ENCODE measurements at regions of chrX and their contacts with region 1.

Region 1: GRCh38 chrX:151082076-151082948 is 94.1 kb upstream of the GPR50 start:
- H3K4me3 ChIP-seq: no peak overlapping the region
- H3K27ac ChIP-seq: no peak overlapping the region
- H3K4me1 ChIP-seq: no peaks in the 10 kb centered on the region
- CTCF ChIP-seq: peak; percentile 82

Region 2: DNA sequence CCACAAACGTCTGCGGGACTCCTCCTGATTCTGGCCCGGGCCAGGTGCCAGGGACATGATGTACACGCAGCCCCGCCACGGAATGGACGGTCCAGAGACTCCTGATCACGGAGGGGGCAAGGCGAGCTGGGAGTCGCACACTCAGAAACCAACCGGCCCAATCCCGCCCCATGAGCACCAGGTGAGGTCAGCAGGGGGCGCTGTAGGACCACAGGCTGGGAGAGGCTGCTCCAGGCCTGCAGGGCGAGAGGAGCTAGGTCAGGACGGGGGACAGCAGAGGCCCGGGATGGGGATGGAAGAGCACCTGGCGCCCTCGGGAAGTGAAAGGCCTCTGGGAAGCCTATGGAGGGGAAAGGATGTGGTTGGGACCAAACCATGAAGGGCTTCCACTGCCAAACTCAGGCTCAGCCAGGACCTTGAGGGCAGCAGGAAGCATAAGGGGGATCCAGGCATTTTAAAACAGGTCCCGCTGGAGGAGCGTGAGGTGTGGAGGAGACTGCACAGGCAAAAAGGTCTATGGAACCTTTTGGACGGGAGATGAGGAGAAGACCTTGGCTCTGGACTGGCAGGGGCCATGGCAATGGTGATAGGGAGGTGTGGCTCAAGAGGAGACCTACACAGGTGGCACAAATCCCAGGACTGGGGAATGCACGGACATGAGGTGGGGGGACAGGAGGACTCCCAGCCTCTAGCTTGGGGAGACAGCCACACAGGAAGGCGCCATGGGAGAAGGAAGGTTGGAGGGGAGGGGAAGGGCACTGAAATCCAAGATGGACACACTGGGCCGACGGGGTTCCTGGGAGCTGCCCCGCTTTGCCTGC is 310.0 kb before region 1 on chrX:
- CTCF ChIA-PET with region 1: interaction called, 99 read pairs
- POLR2A ChIA-PET with region 1: interaction called, 5 read pairs
- H3K4me3 ChIP-seq: no peak overlapping the region
- H3K27ac ChIP-seq: no peak overlapping the region
- H3K4me1 ChIP-seq: no peaks in the 10 kb centered on the region
- CTCF ChIP-seq: peak; percentile 93

Region 3: DNA sequence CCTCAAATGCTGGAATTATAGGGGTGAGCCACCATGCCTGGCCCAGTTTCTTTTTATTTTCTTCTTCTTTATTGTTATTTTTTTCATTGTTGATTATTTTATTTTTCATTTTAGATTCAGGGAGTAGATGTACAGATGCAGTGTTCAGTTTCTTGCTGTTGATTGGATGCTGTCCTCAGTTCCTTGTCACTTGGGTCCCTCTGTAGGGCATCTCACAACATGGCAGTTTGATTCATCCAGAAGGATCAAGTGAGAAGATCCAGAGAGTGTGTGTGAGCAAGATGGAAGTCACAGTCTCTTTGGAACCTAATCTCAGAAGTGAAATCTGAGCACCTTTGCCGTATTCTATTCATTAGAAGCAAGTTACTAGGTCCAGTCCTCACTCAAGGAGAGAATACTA is 78.2 kb before region 1 on chrX:
- CTCF ChIA-PET with region 1: no interaction called
- POLR2A ChIA-PET with region 1: no interaction called
- H3K4me3 ChIP-seq: no peak overlapping the region
- H3K27ac ChIP-seq: no peak overlapping the region
- H3K4me1 ChIP-seq: no peaks in the 10 kb centered on the region
- CTCF ChIP-seq: no peak

Measured in HEK293 (cell line).